ENCODE measurements at regions of chr1 and their contacts with region 1.

Region 1: GRCh38 chr1:248906009-248906752 is at the start of gene PGBD2:
- DNase-seq: peak; percentile 93 to 96
- H3K4me3 ChIP-seq: peak within 1 kb of the TSS; percentile 100
- H3K4me3 Mint-ChIP-seq: peak within 1 kb of the TSS; percentile 87
- H3K27ac Mint-ChIP-seq: peak within 1 kb of the TSS; percentile 95
- H3K4me1 ChIP-seq: peaks cover 9% of the 10 kb centered on the region
- H3K4me1 Mint-ChIP-seq: peaks cover 17% of the 10 kb centered on the region
- H3K27me3 ChIP-seq: no peaks in the 10 kb centered on the region
- H3K27me3 Mint-ChIP-seq: no peaks in the 10 kb centered on the region
- CTCF ChIP-seq: peak; percentile 74 to 87
- total RNA-seq, gene PGBD2: 6.7 and 7.0 TPM in 2 replicates

Region 2: GRCh38 chr1:248590055-248590454 is 316.1 kb before region 1 on chr1:
- CTCF ChIA-PET with region 1: no interaction called
- POLR2A ChIA-PET with region 1: no interaction called
- intact Hi-C with region 1: no loop called
- DNase-seq: no peak
- H3K4me3 ChIP-seq: no peak overlapping the region
- H3K4me3 Mint-ChIP-seq: no peak overlapping the region
- H3K27ac Mint-ChIP-seq: no peak overlapping the region
- H3K4me1 ChIP-seq: no peaks in the 10 kb centered on the region
- H3K4me1 Mint-ChIP-seq: no peaks in the 10 kb centered on the region
- H3K27me3 ChIP-seq: no peaks in the 10 kb centered on the region
- H3K27me3 Mint-ChIP-seq: peaks cover 2% of the 10 kb centered on the region
- CTCF ChIP-seq: no peak

Region 3: GRCh38 chr1:248825909-248826760 is 80.0 kb before region 1 on chr1 and contains the start of gene SH3BP5L:
- CTCF ChIA-PET with region 1: no interaction called
- POLR2A ChIA-PET with region 1: interaction called, 4 read pairs
- intact Hi-C with region 1: loop called (anchors 1 kb)
- DNase-seq: peak; percentile 89 to 93
- H3K4me3 ChIP-seq: peak within 1 kb of the TSS; percentile 82
- H3K4me3 Mint-ChIP-seq: peak within 1 kb of the TSS; percentile 95
- H3K27ac Mint-ChIP-seq: peak within 1 kb of the TSS; percentile 99
- H3K4me1 ChIP-seq: peaks cover 8% of the 10 kb centered on the region
- H3K4me1 Mint-ChIP-seq: peaks cover 19% of the 10 kb centered on the region
- H3K27me3 ChIP-seq: no peaks in the 10 kb centered on the region
- H3K27me3 Mint-ChIP-seq: no peaks in the 10 kb centered on the region
- CTCF ChIP-seq: peak; percentile 60 to 89
- total RNA-seq, gene SH3BP5L: 21.3 and 22.4 TPM in 2 replicates

Region 4: GRCh38 chr1:248837794-248838356 is 68.3 kb before region 1 on chr1 and contains the start of gene ZNF672:
- CTCF ChIA-PET with region 1: interaction called, 3 read pairs
- POLR2A ChIA-PET with region 1: interaction called, 9 read pairs
- intact Hi-C with region 1: loop called (anchors 1 kb)
- DNase-seq: peak; percentile 97 to 98
- H3K4me3 ChIP-seq: peak within 1 kb of the TSS; percentile 87
- H3K4me3 Mint-ChIP-seq: no peak within 1 kb of the TSS
- H3K27ac Mint-ChIP-seq: peak within 1 kb of the TSS; percentile 95
- H3K4me1 ChIP-seq: no peaks in the 10 kb centered on the region
- H3K4me1 Mint-ChIP-seq: no peaks in the 10 kb centered on the region
- H3K27me3 ChIP-seq: no peaks in the 10 kb centered on the region
- H3K27me3 Mint-ChIP-seq: peaks cover 3% of the 10 kb centered on the region
- CTCF ChIP-seq: no peak
- total RNA-seq, gene ZNF672: 27.3 and 29.1 TPM in 2 replicates

Region 5: GRCh38 chr1:248858891-248859889 is 47.0 kb before region 1 on chr1 and contains the start of gene ZNF692:
- CTCF ChIA-PET with region 1: interaction called, 5 read pairs
- POLR2A ChIA-PET with region 1: interaction called, 10 read pairs
- intact Hi-C with region 1: loop called (anchors 1 kb)
- DNase-seq: peak; percentile 97
- H3K4me3 ChIP-seq: peak within 1 kb of the TSS; percentile 71
- H3K4me3 Mint-ChIP-seq: peak within 1 kb of the TSS; percentile 91
- H3K27ac Mint-ChIP-seq: peak within 1 kb of the TSS; percentile 87
- H3K4me1 ChIP-seq: peaks cover 25% of the 10 kb centered on the region
- H3K4me1 Mint-ChIP-seq: peaks cover 16% of the 10 kb centered on the region
- H3K27me3 ChIP-seq: no peaks in the 10 kb centered on the region
- H3K27me3 Mint-ChIP-seq: no peaks in the 10 kb centered on the region
- CTCF ChIP-seq: no peak
- total RNA-seq, gene ZNF692: 48.5 and 58.4 TPM in 2 replicates

Region 6: GRCh38 chr1:248873409-248873992 is 32.7 kb before region 1 on chr1:
- CTCF ChIA-PET with region 1: interaction called, 5 read pairs
- POLR2A ChIA-PET with region 1: interaction called, 10 read pairs
- intact Hi-C with region 1: loop called (anchors 1 kb)
- DNase-seq: peak; percentile 95 to 97
- H3K4me3 ChIP-seq: peak overlapping the region; percentile 40
- H3K4me3 Mint-ChIP-seq: peak overlapping the region; percentile 98
- H3K27ac Mint-ChIP-seq: peak overlapping the region; percentile 95
- H3K4me1 ChIP-seq: peaks cover 6% of the 10 kb centered on the region; the same call in 1 of the 2 replicates
- H3K4me1 Mint-ChIP-seq: peaks cover 25% of the 10 kb centered on the region
- H3K27me3 ChIP-seq: no peaks in the 10 kb centered on the region
- H3K27me3 Mint-ChIP-seq: peaks cover 4% of the 10 kb centered on the region
- CTCF ChIP-seq: no peak

Region 7: GRCh38 chr1:248890549-248891498 is 15.4 kb before region 1 on chr1:
- CTCF ChIA-PET with region 1: no interaction called
- POLR2A ChIA-PET with region 1: interaction called, 4 read pairs
- intact Hi-C with region 1: loop called (anchors 2 kb)
- DNase-seq: no peak
- H3K4me3 ChIP-seq: no peak overlapping the region
- H3K4me3 Mint-ChIP-seq: no peak overlapping the region
- H3K27ac Mint-ChIP-seq: no peak overlapping the region
- H3K4me1 ChIP-seq: peaks cover 5% of the 10 kb centered on the region; the same call in 1 of the 2 replicates
- H3K4me1 Mint-ChIP-seq: peaks cover 6% of the 10 kb centered on the region
- H3K27me3 ChIP-seq: no peaks in the 10 kb centered on the region
- H3K27me3 Mint-ChIP-seq: no peaks in the 10 kb centered on the region
- CTCF ChIP-seq: no peak

Region 8: GRCh38 chr1:248924696-248925532 is 18.7 kb after region 1 on chr1:
- CTCF ChIA-PET with region 1: interaction called, 3 read pairs
- POLR2A ChIA-PET with region 1: no interaction called
- intact Hi-C with region 1: loop called (anchors 1 kb)
- DNase-seq: peak; percentile 42 to 50
- H3K4me3 ChIP-seq: no peak overlapping the region
- H3K4me3 Mint-ChIP-seq: no peak overlapping the region
- H3K27ac Mint-ChIP-seq: no peak overlapping the region
- H3K4me1 ChIP-seq: no peaks in the 10 kb centered on the region
- H3K4me1 Mint-ChIP-seq: no peaks in the 10 kb centered on the region
- H3K27me3 ChIP-seq: no peaks in the 10 kb centered on the region
- H3K27me3 Mint-ChIP-seq: no peaks in the 10 kb centered on the region
- CTCF ChIP-seq: peak; percentile 51 to 69